Heart right ventricle (tissue), 16 donors: ENCODE measurements at regions of chr16 and their contacts with region 1.

Region 1: DNA sequence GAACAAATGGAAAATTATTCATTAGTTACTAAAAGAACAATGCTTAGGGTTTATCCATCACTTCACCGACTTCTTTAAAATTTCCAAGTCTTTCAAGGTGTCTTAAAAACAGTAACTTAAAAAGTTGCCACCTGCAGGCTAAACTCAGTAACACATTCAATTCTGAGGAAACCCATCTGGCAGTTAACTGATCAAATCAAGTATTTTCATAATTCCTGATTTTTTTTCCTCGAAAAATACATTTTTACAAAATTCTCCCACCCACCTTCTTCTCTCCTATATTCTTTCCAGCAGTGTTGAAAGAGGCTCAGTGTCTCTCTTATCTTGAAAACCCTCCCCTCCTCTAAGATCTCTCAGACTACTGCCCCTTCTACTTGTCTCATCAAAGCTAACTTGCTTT is 29.9 kb downstream of the PARN start:
- DNase-seq: no peak
- ATAC-seq: no peak
- H3K4me3 ChIP-seq: no peak overlapping the region
- H3K27ac ChIP-seq: no peak overlapping the region
- H3K4me1 ChIP-seq: no peaks in the 10 kb centered on the region
- H3K27me3 ChIP-seq: no peaks in the 10 kb centered on the region
- CTCF ChIP-seq: peak in 7 of 9 donors; percentile 21 to 51 (median 43)

Region 2: GRCh38 chr16:14539631-14540030 is 60.5 kb before region 1 on chr16:
- intact Hi-C with region 1: loop called in 1 of 10 experiments (anchors 10 kb)
- DNase-seq: no peak
- ATAC-seq: no peak
- H3K4me3 ChIP-seq: no peak overlapping the region
- H3K27ac ChIP-seq: no peak overlapping the region
- H3K4me1 ChIP-seq: no peaks in the 10 kb centered on the region
- H3K27me3 ChIP-seq: no peaks in the 10 kb centered on the region
- CTCF ChIP-seq: no peak

Region 3: GRCh38 chr16:15631730-15632409 is 1031.7 kb after region 1 on chr16:
- intact Hi-C with region 1: no loop called
- DNase-seq: no peak
- ATAC-seq: no peak
- H3K4me3 ChIP-seq: no peak overlapping the region
- H3K27ac ChIP-seq: no peak overlapping the region
- H3K4me1 ChIP-seq: peaks cover 0 to 10% (median 0%) of the 10 kb centered on the region in 9 donors
- H3K27me3 ChIP-seq: no peaks in the 10 kb centered on the region
- CTCF ChIP-seq: no peak